IMR-90 (cell line): ENCODE measurements at regions of chr6 and their contacts with region 1.

Region 1: DNA sequence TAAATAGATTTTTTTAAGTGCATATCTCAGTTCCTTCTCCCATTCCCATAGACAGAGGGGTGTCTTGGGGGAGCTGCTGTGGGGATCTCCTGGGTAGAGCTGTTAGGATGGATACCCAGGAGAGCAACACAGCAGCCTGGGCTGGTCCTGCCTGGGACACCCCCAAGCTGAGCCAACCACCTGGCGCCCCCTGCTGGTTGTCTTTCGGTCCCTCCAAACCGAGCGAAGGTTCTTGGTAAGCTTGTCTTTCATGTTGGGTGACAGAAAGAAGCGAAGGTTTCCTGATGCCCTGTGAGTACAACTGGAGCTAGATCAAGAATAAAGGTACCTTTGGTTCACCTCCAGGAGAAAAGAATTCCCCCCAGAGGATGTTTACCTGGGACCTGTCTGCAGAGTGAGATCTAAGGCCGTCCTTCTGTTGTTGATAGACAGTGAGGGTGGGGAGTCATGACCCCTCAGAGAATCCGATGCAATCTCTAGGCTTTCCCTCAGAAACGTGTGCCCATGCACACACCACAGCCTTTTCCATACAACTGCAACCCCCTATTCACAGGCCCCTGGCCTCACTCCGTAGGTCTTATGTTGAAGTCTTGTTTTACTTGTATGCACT is 50.8 kb downstream of the SNX9 start:
- DNase-seq: peak; percentile 64
- ATAC-seq: peak; percentile 90
- H3K4me3 ChIP-seq: no peak overlapping the region
- H3K27ac ChIP-seq: no peak overlapping the region
- H3K4me1 ChIP-seq: no peaks in the 10 kb centered on the region
- H3K27me3 ChIP-seq: no peaks in the 10 kb centered on the region
- CTCF ChIP-seq: peak; percentile 81
- POLR2A ChIP-seq: 0 out of 2 replicates have a peak, but pooled peaks have one; percentile 26
- RAD21 ChIP-seq: peak; percentile 90

Region 2: GRCh38 chr6:157323255-157323965 is 550.4 kb before region 1 on chr6 and contains the start of gene TMEM242:
- CTCF ChIA-PET with region 1: interaction called, 4 read pairs
- POLR2A ChIA-PET with region 1: no interaction called
- dilution Hi-C with region 1: no loop called
- in situ Hi-C with region 1: loop called (anchors 25 kb)
- intact Hi-C with region 1: loop called (anchors 5 kb)
- DNase-seq: peak; percentile 93
- ATAC-seq: peak; percentile 96
- H3K4me3 ChIP-seq: peak within 1 kb of the TSS; percentile 86
- H3K27ac ChIP-seq: peak within 1 kb of the TSS; percentile 84
- H3K4me1 ChIP-seq: no peaks in the 10 kb centered on the region
- H3K27me3 ChIP-seq: no peaks in the 10 kb centered on the region
- CTCF ChIP-seq: no peak
- POLR2A ChIP-seq: peak; percentile 85
- RAD21 ChIP-seq: 0 out of 2 replicates have a peak, but pooled peaks have one; percentile 32
- total RNA-seq, gene TMEM242: 2.3 and 4.2 TPM in 2 replicates

Region 3: GRCh38 chr6:157392927-157393668 is 480.7 kb before region 1 on chr6:
- CTCF ChIA-PET with region 1: no interaction called
- POLR2A ChIA-PET with region 1: no interaction called
- dilution Hi-C with region 1: no loop called
- in situ Hi-C with region 1: no loop called
- intact Hi-C with region 1: no loop called
- DNase-seq: no peak
- ATAC-seq: no peak
- H3K4me3 ChIP-seq: no peak overlapping the region
- H3K27ac ChIP-seq: no peak overlapping the region
- H3K4me1 ChIP-seq: no peaks in the 10 kb centered on the region; the same call in 1 of the 2 replicates
- H3K27me3 ChIP-seq: no peaks in the 10 kb centered on the region
- CTCF ChIP-seq: no peak
- POLR2A ChIP-seq: no peak
- RAD21 ChIP-seq: no peak

Region 4: GRCh38 chr6:157667211-157668008 is 206.4 kb before region 1 on chr6:
- CTCF ChIA-PET with region 1: interaction called, 5 read pairs
- POLR2A ChIA-PET with region 1: no interaction called
- dilution Hi-C with region 1: no loop called
- in situ Hi-C with region 1: no loop called
- intact Hi-C with region 1: loop called (anchors 1 kb)
- DNase-seq: peak; percentile 70
- ATAC-seq: peak; percentile 45
- H3K4me3 ChIP-seq: no peak overlapping the region
- H3K27ac ChIP-seq: no peak overlapping the region
- H3K4me1 ChIP-seq: peaks cover 10% of the 10 kb centered on the region; the same call in 1 of the 2 replicates
- H3K27me3 ChIP-seq: no peaks in the 10 kb centered on the region
- CTCF ChIP-seq: peak; percentile 84
- POLR2A ChIP-seq: no peak
- RAD21 ChIP-seq: peak; percentile 86

Region 5: GRCh38 chr6:157756708-157757429 is 117.0 kb before region 1 on chr6:
- CTCF ChIA-PET with region 1: interaction called, 25 read pairs
- POLR2A ChIA-PET with region 1: no interaction called
- dilution Hi-C with region 1: no loop called
- in situ Hi-C with region 1: loop called (anchors 5 kb)
- intact Hi-C with region 1: loop called (anchors 1 kb)
- DNase-seq: peak; percentile 73
- ATAC-seq: peak; percentile 83
- H3K4me3 ChIP-seq: no peak overlapping the region
- H3K27ac ChIP-seq: peak overlapping the region; percentile 40; the same call in 1 of the 2 replicates
- H3K4me1 ChIP-seq: peaks cover 18% of the 10 kb centered on the region
- H3K27me3 ChIP-seq: no peaks in the 10 kb centered on the region; the same call in 1 of the 2 replicates
- CTCF ChIP-seq: peak; percentile 92
- POLR2A ChIP-seq: no peak
- RAD21 ChIP-seq: peak; percentile 92

Region 6: GRCh38 chr6:157764178-157765033 is 109.4 kb before region 1 on chr6:
- CTCF ChIA-PET with region 1: interaction called, 13 read pairs
- POLR2A ChIA-PET with region 1: no interaction called
- dilution Hi-C with region 1: no loop called
- in situ Hi-C with region 1: loop called (anchors 5 kb)
- intact Hi-C with region 1: no loop called
- DNase-seq: peak; percentile 100
- ATAC-seq: peak; percentile 95
- H3K4me3 ChIP-seq: no peak overlapping the region
- H3K27ac ChIP-seq: peak overlapping the region; percentile 74
- H3K4me1 ChIP-seq: peaks cover 32% of the 10 kb centered on the region
- H3K27me3 ChIP-seq: no peaks in the 10 kb centered on the region
- CTCF ChIP-seq: no peak
- POLR2A ChIP-seq: peak; percentile 58
- RAD21 ChIP-seq: peak; percentile 23

Region 7: GRCh38 chr6:158284007-158284875 is 410.4 kb after region 1 on chr6:
- CTCF ChIA-PET with region 1: no interaction called
- POLR2A ChIA-PET with region 1: no interaction called
- dilution Hi-C with region 1: no loop called
- in situ Hi-C with region 1: no loop called
- intact Hi-C with region 1: no loop called
- DNase-seq: peak; percentile 98
- ATAC-seq: peak; percentile 90
- H3K4me3 ChIP-seq: peak overlapping the region; percentile 4; the same call in 1 of the 2 replicates
- H3K27ac ChIP-seq: peak overlapping the region; percentile 86
- H3K4me1 ChIP-seq: peaks cover 13% of the 10 kb centered on the region
- H3K27me3 ChIP-seq: no peaks in the 10 kb centered on the region
- CTCF ChIP-seq: no peak
- POLR2A ChIP-seq: peak; percentile 61
- RAD21 ChIP-seq: no peak